ENCODE measurements at regions of chr20 and their contacts with region 1.

Region 1: DNA sequence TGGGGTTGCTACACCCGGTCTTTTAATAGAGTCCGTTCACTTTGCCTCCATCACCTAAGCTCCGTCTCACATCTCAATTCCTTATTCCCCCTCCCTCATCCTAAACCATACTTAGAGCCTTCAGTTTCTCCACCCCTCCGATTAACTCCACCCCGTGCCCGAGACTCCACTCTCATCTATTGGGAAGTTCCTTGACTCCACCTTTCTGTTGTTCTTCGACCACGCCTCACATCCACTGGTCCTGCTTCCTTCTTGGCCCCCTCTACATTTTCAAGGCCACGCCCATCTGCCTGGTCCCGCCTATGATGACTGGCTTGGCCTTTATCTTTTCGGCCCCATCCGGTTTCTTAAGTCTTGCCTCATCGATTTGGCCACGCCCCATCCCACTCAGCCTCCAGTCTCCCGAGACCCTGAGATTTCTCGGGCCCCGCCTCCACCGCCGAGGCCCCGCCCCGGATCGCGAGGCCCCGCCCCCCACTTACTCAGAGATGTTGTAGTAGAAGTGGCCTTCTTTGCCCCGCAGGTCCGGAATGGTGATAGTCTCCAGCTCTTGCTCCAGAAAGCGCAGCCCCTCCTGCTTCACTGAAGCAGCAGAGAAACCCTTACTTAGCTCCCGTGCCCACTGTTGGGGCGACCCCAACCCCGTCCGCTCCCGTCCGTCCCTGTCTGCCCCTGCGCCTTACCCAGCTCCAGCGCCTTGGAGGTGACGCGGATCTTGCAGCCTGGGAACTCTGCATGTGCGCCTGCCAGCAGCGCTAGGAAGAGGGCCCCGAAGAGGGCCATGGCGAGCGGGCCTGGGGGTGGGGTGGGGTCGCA is 1.1 kb downstream of the PLTP start:
- DNase-seq: peak; percentile 99
- H3K4me3 ChIP-seq: peak overlapping the region; percentile 69
- H3K27ac ChIP-seq: peak overlapping the region; percentile 75
- H3K27me3 ChIP-seq: no peaks in the 10 kb centered on the region
- CTCF ChIP-seq: no peak

Region 2: DNA sequence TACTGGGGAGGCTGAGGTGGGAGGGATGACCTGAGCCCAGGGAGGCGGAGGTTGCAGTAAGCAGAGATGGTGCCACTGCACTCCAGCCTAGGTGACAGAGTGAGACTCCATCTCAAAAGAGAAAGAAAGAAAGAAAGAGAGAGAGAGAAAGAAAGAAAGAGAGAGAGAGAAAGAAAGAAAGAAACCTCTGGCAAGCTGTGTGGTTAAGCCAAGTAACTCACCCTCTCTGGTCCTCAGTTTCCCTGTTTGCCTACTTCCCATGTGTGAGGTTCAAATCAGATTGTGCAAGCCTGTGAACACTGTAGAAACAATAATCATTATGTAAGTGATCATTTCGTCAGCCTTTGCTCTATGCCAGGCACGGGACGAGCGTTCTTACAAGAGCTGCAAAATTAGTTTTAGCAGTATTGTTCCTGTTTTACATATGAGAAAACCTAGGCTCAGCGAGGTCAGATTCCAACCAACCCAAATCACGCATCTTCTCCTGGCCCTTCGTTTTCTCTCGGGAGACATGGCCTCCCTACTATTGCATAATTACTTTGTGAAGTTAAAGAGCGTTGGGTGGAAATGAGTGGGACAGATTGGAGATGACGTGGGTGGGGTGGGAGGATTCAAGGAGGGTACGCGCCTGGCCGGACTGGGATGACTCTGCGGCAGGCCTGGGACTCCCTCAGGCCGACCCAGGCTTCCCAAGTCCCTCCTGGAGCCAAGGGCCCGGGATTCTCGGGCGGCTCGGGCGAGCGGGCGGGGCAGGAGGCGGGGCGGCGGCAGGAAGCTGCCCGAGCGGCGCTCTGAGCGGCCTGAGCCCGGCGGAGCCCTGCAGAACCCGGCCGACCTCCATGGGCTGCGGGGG is 77.6 kb before region 1 on chr20 and contains the start of gene SNX21:
- CTCF ChIA-PET with region 1: no interaction called
- POLR2A ChIA-PET with region 1: no interaction called
- DNase-seq: peak; percentile 83
- H3K4me3 ChIP-seq: peak within 1 kb of the TSS; percentile 83
- H3K27ac ChIP-seq: peak within 1 kb of the TSS; percentile 88
- H3K27me3 ChIP-seq: no peaks in the 10 kb centered on the region
- CTCF ChIP-seq: no peak
- polyA plus RNA-seq, gene SNX21: 9.2 and 11.5 TPM in 2 replicates

Region 3: DNA sequence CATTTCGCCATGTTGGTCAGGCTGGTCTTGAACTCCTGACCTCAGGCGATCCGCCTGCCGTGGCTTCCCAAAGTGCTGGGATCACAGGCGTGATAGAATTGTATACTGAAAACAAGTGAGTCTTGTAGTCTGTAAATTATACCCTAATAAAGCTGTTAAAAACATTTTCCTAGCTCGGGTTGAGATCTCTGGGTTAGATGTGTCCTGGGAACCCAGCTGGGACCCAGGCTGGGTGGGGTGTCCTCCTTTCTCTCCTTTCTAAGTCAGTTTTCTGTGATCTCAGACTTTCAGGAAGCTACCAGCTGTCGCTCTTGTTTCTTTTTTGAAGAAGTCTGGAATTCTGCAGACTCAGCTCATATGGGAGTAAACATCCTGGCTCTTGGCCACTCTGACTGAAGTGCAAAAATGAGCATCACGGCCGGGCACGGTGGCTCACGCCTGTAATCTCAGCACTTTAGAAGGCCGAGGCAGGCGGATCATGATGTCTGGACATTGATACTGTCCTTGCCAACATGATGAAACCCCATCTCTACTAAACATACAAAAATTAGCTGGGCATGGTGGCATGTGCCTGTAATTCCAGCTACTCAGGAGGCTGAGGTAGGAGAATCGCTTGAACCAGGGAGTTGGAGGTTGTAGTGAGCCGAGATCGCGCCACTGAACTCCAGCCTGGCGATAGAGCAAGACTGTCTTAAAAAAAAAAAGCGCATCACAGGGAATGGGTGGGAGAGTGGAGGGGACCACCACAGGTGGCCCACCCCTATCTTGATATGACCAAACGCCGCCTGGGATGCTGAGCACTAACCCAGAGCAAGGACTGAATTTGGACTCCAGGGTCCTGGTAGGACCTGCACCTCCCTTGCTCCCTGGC is 13.7 kb after region 1 on chr20:
- CTCF ChIA-PET with region 1: interaction called, 3 read pairs
- POLR2A ChIA-PET with region 1: interaction called, 15 read pairs
- DNase-seq: no peak
- H3K4me3 ChIP-seq: no peak overlapping the region
- H3K27ac ChIP-seq: peak overlapping the region; percentile 47
- H3K27me3 ChIP-seq: no peaks in the 10 kb centered on the region
- CTCF ChIP-seq: no peak

Region 4: GRCh38 chr20:46011631-46012482 is 101.0 kb after region 1 on chr20:
- CTCF ChIA-PET with region 1: no interaction called
- POLR2A ChIA-PET with region 1: no interaction called
- DNase-seq: no peak
- H3K4me3 ChIP-seq: no peak overlapping the region
- H3K27ac ChIP-seq: no peak overlapping the region
- H3K27me3 ChIP-seq: peaks cover 73% of the 10 kb centered on the region
- CTCF ChIP-seq: peak; percentile 16; the same call in 1 of the 2 replicates